Gastrocnemius medialis (tissue), 4 donors: ENCODE measurements at regions of chr22 and their contacts with region 1.

Region 1: GRCh38 chr22:33302049-33302545 is 243.9 kb upstream of the SYN3 start:
- DNase-seq: peak; percentile 49 to 66
- ATAC-seq: peak; percentile 69 to 85
- H3K4me3 ChIP-seq: no peak overlapping the region
- H3K27ac ChIP-seq: no peak overlapping the region
- H3K4me1 ChIP-seq: peaks cover 5 to 6% of the 10 kb centered on the region in 2 donors
- H3K27me3 ChIP-seq: no peaks in the 10 kb centered on the region
- CTCF ChIP-seq: peak; percentile 82 to 95 (median 90)
- POLR2A ChIP-seq: no peak

Region 2: GRCh38 chr22:33361581-33361980 is 59.5 kb after region 1 on chr22:
- in situ Hi-C with region 1: no loop called
- intact Hi-C with region 1: no loop called
- DNase-seq: no peak
- ATAC-seq: no peak
- H3K4me3 ChIP-seq: no peak overlapping the region
- H3K27ac ChIP-seq: no peak overlapping the region
- H3K4me1 ChIP-seq: no peaks in the 10 kb centered on the region
- H3K27me3 ChIP-seq: no peaks in the 10 kb centered on the region
- CTCF ChIP-seq: no peak
- POLR2A ChIP-seq: no peak

Region 3: DNA sequence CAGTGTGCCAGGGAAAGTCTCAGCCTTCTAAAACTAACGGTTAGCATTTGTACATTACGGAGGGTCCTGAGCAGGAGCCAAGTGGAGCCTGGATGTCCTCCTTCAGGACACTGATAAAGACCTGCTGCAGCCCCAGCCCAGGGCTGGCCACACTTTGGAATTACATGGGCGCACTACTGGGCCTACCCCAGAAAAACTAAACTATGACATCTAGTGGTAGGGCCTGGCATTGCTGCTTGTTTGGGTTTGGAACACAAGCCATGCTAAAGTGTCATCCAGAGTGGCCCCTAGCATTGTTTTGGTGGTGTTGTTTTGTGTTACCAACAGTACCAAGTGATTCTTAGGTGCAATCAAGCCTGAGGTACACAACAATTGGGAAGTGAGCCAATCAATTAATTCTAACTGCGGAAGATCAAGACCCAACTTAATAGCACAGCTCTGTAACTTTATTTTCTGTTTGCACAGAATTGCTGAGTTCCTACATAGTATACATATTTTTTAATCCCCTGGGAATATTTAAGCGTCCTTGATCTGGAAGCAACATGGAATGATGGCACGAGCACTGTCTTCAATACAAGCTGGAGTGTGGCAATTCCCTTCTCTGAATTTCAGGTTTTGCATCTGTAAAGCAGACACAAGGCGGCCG is 277.5 kb after region 1 on chr22:
- in situ Hi-C with region 1: loop called (anchors 5 to 25 kb)
- intact Hi-C with region 1: loop called (anchors 1 kb)
- DNase-seq: peak in 1 of 2 donors; percentile 34
- ATAC-seq: peak; percentile 70 to 87
- H3K4me3 ChIP-seq: no peak overlapping the region
- H3K27ac ChIP-seq: no peak overlapping the region
- H3K4me1 ChIP-seq: peaks cover 0 to 9% of the 10 kb centered on the region in 2 donors
- H3K27me3 ChIP-seq: no peaks in the 10 kb centered on the region
- CTCF ChIP-seq: peak; percentile 84 to 94 (median 86)
- POLR2A ChIP-seq: no peak

Region 4: DNA sequence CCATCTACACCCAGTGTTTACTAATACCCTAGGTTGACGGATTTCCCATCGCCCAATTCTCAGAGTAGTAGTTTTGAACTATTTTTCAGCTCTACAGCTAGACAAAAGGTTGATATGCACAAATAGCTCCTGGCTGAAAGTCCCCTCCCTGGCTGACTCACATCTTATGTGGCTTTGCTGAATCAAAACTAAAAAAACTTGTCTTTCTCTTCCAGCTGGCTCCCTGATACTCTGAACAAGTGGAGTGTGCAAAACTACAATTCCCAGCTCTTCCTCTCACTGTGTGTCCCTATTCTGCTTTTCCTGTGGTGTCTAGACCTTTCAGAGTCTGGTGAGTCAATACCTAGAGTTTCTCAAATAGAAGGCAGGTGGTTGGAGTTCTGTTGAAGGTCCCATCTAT is 630.9 kb after region 1 on chr22:
- in situ Hi-C with region 1: loop called in 1 of 4 experiments (anchors 25 kb)
- intact Hi-C with region 1: no loop called
- DNase-seq: no peak
- ATAC-seq: no peak
- H3K4me3 ChIP-seq: no peak overlapping the region
- H3K27ac ChIP-seq: no peak overlapping the region
- H3K4me1 ChIP-seq: no peaks in the 10 kb centered on the region
- H3K27me3 ChIP-seq: no peaks in the 10 kb centered on the region
- CTCF ChIP-seq: no peak
- POLR2A ChIP-seq: no peak

Region 5: DNA sequence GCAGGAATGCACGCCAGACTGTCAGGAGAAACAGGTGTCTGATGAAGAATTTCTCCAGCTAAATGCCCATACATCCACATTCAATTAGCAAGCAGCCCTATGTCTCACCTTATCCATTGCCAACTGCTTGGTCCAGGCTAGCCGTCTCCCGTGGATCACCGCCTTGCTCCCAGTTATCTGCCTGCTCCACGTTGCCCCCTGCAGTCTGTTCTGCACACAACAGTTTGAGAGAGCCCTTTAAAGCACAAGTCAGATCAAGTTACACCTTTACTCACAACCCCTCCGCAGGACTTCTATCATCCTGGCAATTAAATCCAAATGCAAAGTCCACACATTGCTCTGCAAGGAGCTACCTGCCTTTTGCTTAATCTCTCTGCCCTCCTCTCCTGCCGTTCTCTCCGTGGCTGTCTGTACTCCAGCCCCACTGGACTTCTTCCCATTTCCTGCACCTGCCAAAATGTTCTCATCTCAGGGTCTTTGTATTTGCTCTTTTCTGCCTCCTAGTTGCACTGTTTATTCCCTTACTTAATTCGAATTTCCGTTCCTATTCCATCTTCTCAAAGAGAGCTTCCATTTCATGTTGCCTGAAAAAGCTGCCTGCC is 803.5 kb after region 1 on chr22:
- in situ Hi-C with region 1: loop called in 3 of 4 experiments (anchors 10 to 25 kb)
- intact Hi-C with region 1: loop called (anchors 2 kb)
- DNase-seq: peak in 1 of 2 donors; percentile 28
- ATAC-seq: peak; percentile 45 to 66
- H3K4me3 ChIP-seq: no peak overlapping the region
- H3K27ac ChIP-seq: no peak overlapping the region
- H3K4me1 ChIP-seq: no peaks in the 10 kb centered on the region
- H3K27me3 ChIP-seq: peaks cover 0 to 10% (median 0%) of the 10 kb centered on the region in 3 donors
- CTCF ChIP-seq: peak in 4 of 5 experiments; percentile 36 to 61 (median 52)
- POLR2A ChIP-seq: no peak

Region 6: DNA sequence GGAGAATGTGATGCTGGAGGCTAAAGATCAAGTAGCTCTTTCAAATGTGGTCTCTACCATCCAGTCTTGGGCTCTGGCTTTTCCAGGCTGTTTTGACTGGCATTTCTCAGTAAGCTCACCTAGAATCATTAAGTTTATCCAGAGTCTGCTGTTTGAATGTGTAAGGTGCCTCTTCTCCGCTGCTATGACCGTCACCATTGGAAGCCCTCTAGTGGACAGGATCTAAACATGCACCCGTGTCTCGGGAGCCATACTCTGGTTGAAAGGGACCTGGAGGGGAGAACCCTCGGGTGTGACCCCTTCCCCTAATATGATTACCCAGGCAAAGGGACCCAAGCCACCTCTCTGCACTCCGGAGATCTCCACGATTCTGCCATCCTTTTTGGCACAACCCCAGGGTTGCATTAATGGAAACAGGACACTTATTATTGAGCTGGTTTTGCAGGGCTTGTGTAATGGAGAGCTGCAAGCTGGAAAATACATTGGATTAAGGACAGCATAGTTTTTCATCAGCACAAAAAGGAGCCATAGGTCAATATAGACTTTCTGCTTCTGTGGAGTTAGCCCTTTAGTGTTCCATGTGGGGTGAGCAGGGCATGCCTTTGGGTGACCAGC is 809.2 kb after region 1 on chr22:
- in situ Hi-C with region 1: loop called in 3 of 4 experiments (anchors 10 to 25 kb)
- intact Hi-C with region 1: loop called (anchors 2 kb)
- DNase-seq: peak in 1 of 2 donors; percentile 13
- ATAC-seq: peak; percentile 63 to 64
- H3K4me3 ChIP-seq: no peak overlapping the region
- H3K27ac ChIP-seq: no peak overlapping the region
- H3K4me1 ChIP-seq: no peaks in the 10 kb centered on the region
- H3K27me3 ChIP-seq: peaks cover 0 to 5% (median 0%) of the 10 kb centered on the region in 3 donors
- CTCF ChIP-seq: peak; percentile 30 to 72 (median 54)
- POLR2A ChIP-seq: no peak